Gastrocnemius medialis (tissue), 4 donors: ENCODE measurements at regions of chr16 and their contacts with region 1.

Region 1: GRCh38 chr16:60031740-60032139 is 1297.6 kb upstream of the GOT2 start:
- DNase-seq: no peak
- ATAC-seq: no peak
- H3K4me3 ChIP-seq: no peak overlapping the region
- H3K27ac ChIP-seq: no peak overlapping the region
- H3K4me1 ChIP-seq: no peaks in the 10 kb centered on the region
- H3K27me3 ChIP-seq: no peaks in the 10 kb centered on the region
- CTCF ChIP-seq: no peak
- POLR2A ChIP-seq: no peak

Region 2: GRCh38 chr16:60001523-60001922 is 30.2 kb before region 1 on chr16:
- in situ Hi-C with region 1: no loop called
- intact Hi-C with region 1: no loop called
- DNase-seq: no peak
- ATAC-seq: no peak
- H3K4me3 ChIP-seq: no peak overlapping the region
- H3K27ac ChIP-seq: no peak overlapping the region
- H3K4me1 ChIP-seq: no peaks in the 10 kb centered on the region
- H3K27me3 ChIP-seq: no peaks in the 10 kb centered on the region
- CTCF ChIP-seq: no peak
- POLR2A ChIP-seq: no peak

Region 3: GRCh38 chr16:60142619-60143347 is 111.0 kb after region 1 on chr16:
- in situ Hi-C with region 1: loop called in 1 of 4 experiments (anchors 25 kb)
- intact Hi-C with region 1: no loop called
- DNase-seq: no peak
- ATAC-seq: no peak
- H3K4me3 ChIP-seq: no peak overlapping the region
- H3K27ac ChIP-seq: no peak overlapping the region
- H3K4me1 ChIP-seq: no peaks in the 10 kb centered on the region
- H3K27me3 ChIP-seq: no peaks in the 10 kb centered on the region
- CTCF ChIP-seq: no peak
- POLR2A ChIP-seq: no peak